Activated CD4-positive, alpha-beta T cell treated with anti-CD3 and anti-CD28 coated beads for 36 hours (primary cell): ENCODE measurements at regions of chr11 and their contacts with region 1.

Region 1: DNA sequence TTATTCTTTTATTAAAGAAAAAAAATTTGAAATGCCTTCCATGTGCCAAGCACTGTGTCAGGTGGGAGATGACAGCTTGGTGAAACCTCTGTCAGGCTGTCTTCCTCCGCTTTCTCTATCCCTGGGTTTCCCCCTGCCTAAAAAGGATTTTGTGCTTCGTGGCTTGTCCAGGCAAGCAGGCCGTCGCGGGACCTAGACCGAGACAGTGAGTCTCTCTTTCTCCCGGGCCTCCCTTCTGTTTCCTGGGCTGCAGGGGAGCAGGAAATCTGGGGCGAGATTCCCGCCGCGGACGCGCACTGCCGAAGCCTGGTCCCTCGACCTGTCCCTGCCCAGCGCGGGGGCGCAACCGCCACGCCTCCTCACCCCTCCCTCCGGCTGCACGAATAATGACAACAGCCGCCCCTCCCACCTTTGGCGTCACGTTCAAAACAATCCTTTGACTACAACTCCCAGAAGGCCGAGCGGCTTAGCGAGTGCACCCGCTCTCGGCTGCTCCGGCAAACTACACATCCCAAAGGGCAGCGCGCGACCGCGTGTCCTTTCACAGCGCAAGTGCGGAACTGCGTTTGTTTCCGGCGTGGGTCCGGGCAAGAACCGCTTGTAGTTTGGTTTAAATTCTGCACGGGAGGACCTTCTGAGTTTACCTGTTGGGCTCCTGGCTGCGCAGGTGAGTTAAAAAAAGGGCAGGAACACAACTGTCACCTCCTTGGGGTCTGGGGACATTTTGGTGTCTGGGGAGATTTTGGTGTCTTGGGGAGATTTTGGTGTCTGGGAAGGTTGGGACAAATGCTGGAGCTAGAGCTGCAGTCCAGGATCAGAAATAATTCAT is at the start of gene CLP1:
- DNase-seq: peak; percentile 100
- ATAC-seq: peak; percentile 98
- H3K4me3 Mint-ChIP-seq: peak within 1 kb of the TSS; percentile 83
- H3K27ac Mint-ChIP-seq: peak within 1 kb of the TSS; percentile 95
- H3K4me1 Mint-ChIP-seq: peaks cover 29% of the 10 kb centered on the region
- H3K27me3 Mint-ChIP-seq: no peaks in the 10 kb centered on the region
- total RNA-seq, gene CLP1: 11.9 to 15.9 TPM

Region 2: GRCh38 chr11:57406337-57406904 is 251.0 kb before region 1 on chr11:
- CTCF ChIA-PET with region 1: no interaction called
- POLR2A ChIA-PET with region 1: no interaction called
- intact Hi-C with region 1: loop called in 1 of 2 experiments (anchors 5 kb)
- DNase-seq: peak; percentile 71
- ATAC-seq: peak; percentile 85
- H3K4me3 Mint-ChIP-seq: peak overlapping the region; percentile 18
- H3K27ac Mint-ChIP-seq: peak overlapping the region; percentile 77
- H3K4me1 Mint-ChIP-seq: peaks cover 62% of the 10 kb centered on the region
- H3K27me3 Mint-ChIP-seq: no peaks in the 10 kb centered on the region

Region 3: DNA sequence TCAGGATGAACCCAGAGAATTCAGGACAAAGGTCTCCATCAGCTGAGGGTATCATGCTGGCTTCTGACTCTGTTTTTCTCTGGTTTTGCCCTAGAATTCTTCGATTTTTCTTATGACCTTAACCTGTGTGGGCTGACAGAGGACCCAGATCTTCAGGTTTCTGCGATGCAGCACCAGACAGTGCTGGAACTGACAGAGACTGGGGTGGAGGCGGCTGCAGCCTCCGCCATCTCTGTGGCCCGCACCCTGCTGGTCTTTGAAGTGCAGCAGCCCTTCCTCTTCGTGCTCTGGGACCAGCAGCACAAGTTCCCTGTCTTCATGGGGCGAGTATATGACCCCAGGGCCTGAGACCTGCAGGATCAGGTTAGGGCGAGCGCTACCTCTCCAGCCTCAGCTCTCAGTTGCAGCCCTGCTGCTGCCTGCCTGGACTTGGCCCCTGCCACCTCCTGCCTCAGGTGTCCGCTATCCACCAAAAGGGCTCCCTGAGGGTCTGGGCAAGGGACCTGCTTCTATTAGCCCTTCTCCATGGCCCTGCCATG is 43.1 kb before region 1 on chr11:
- CTCF ChIA-PET with region 1: no interaction called
- POLR2A ChIA-PET with region 1: no interaction called
- intact Hi-C with region 1: no loop called
- DNase-seq: no peak
- ATAC-seq: no peak
- H3K4me3 Mint-ChIP-seq: no peak overlapping the region
- H3K27ac Mint-ChIP-seq: no peak overlapping the region
- H3K4me1 Mint-ChIP-seq: no peaks in the 10 kb centered on the region
- H3K27me3 Mint-ChIP-seq: peaks cover 5% of the 10 kb centered on the region

Region 4: DNA sequence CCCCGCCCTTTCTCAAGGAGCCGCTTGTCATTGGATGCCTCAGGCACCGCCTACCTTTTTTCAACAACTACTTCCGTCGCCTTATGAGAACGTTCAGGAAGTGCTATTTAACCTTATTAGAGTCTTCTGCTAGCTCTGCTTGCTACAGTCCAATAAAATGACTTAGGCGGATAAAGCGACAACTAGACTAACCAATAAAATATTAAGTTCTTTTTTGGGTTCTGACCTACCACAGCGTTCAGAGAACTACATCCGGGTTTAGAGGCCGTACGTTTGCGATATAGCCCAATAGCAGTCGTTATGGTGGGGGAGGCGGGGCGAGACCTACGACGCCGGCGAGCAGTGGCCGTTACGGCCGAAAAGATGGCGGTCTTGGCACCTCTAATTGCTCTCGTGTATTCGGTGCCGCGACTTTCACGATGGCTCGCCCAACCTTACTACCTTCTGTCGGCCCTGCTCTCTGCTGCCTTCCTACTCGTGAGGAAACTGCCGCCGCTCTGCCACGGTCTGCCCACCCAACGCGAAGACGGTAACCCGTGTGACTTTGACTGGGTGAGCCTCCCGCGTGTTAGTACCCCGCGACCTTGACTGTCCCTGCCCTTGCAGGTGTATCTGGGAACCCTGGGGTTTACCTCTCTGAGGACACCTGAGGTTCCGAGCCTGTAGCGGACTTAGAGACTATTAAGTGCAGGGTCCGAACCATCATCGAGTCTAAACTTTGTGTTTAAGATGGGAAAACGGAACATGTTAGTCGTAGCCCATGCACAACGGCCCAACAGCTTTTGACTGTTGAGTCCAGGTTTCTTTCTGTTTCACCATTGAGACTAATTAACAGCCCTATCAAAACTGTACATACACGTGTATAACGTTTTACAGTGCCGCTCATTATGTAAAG is 55.1 kb after region 1 on chr11 and contains the start of gene TMX2:
- CTCF ChIA-PET with region 1: interaction called, 3 read pairs
- POLR2A ChIA-PET with region 1: interaction called, 7 read pairs
- intact Hi-C with region 1: loop called (anchors 1 kb)
- DNase-seq: peak; percentile 94
- ATAC-seq: peak; percentile 93
- H3K4me3 Mint-ChIP-seq: peak within 1 kb of the TSS; percentile 97
- H3K27ac Mint-ChIP-seq: peak within 1 kb of the TSS; percentile 97
- H3K4me1 Mint-ChIP-seq: peaks cover 50% of the 10 kb centered on the region
- H3K27me3 Mint-ChIP-seq: no peaks in the 10 kb centered on the region
- total RNA-seq, gene TMX2: 59.8 to 72.5 TPM

Region 5: GRCh38 chr11:57842873-57843272 is 185.5 kb after region 1 on chr11:
- CTCF ChIA-PET with region 1: no interaction called
- POLR2A ChIA-PET with region 1: no interaction called
- intact Hi-C with region 1: no loop called
- DNase-seq: no peak
- ATAC-seq: no peak
- H3K4me3 Mint-ChIP-seq: no peak overlapping the region
- H3K27ac Mint-ChIP-seq: no peak overlapping the region
- H3K4me1 Mint-ChIP-seq: no peaks in the 10 kb centered on the region
- H3K27me3 Mint-ChIP-seq: peaks cover 5% of the 10 kb centered on the region